PC-9 (cell line): ENCODE measurements at regions of chr17 and their contacts with region 1.

Region 1: DNA sequence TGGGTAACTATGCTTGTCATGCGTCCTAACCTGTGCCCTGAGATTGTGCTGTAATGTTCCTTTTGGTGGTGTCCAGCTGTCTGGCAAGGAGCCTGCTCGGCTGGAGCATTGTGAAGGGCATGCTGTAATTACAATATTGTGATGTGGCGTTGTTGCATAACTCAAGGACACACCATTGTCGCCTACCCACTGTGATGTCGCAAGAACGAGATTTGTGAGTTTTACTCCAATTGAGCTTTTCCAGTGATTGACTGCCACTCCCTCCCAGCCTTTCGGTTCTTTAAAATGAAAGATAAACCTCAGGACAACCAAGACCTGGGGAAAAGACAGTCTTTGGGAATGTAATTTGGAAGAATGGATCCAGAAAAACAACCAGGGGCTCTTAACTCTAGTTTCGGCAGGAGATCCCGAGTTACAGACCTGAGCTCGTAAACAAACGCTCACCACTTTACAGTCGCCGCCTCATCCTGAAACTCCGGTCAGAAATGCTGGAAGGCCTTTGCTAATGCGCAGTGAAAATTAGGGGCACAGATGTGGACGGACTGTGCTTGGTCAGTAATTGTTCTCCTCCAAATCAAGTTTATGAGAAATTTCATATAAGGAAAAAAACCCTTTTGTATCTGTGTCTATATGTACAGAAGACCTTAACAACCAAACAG is 1.3 kb downstream of the ZNF750 start:
- DNase-seq: peak; percentile 76 to 90
- H3K4me3 ChIP-seq: peak overlapping the region; percentile 58
- H3K27ac ChIP-seq: peak overlapping the region; percentile 91
- H3K4me1 ChIP-seq: peaks cover 37% of the 10 kb centered on the region
- H3K27me3 ChIP-seq: no peaks in the 10 kb centered on the region
- CTCF ChIP-seq: no peak

Region 2: DNA sequence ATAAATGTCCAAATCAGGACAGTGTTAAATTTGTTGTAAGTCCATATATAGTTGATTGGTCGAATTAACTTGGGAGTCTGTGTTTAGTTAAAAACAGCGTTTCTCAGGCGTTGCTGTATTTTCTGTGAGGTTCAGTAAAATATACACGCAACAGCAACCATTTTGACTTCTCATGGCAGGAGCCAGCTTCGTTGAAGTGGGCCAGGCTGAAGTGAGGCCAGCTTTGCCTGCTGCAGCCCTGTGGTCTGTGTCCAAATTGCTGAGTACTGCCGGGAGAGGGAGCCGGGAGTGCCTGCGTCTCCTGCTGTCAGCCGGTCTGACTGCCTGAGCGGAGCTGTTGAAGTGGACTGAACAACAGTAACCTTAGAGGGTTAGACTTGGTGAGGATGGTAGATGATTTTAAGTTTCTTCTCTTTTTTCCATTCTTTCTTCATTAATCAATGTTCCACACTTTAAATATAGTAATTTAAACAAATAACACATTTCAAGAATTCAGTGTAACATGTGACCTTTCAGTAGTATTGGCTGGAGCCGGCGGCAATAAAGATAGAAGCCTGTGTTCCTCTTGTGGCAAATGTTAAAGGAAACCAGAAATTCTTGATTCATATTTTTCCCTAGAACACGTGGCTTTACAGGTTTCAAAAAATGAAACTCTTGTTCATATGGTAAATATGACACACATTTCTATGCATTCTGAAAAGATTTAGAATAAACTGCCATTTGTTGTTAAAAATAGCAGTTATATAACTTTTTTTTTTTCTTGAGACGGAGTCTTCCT is 38.3 kb after region 1 on chr17:
- CTCF ChIA-PET with region 1: interaction called, 3 read pairs
- POLR2A ChIA-PET with region 1: no interaction called
- intact Hi-C with region 1: loop called (anchors 1 kb)
- DNase-seq: peak; percentile 68 to 70
- H3K4me3 ChIP-seq: peak overlapping the region; percentile 54; the same call in 1 of the 2 replicates
- H3K27ac ChIP-seq: peak overlapping the region; percentile 100
- H3K4me1 ChIP-seq: peaks cover 42% of the 10 kb centered on the region
- H3K27me3 ChIP-seq: no peaks in the 10 kb centered on the region
- CTCF ChIP-seq: no peak; the same call in 1 of the 2 replicates